GM13976 (cell line): ENCODE measurements at regions of chr3 and their contacts with region 1.

Region 1: GRCh38 chr3:63818281-63819150 is 583 bp upstream of the C3orf49 start:
- DNase-seq: peak; percentile 57
- CTCF ChIP-seq: peak; percentile 71

Region 2: DNA sequence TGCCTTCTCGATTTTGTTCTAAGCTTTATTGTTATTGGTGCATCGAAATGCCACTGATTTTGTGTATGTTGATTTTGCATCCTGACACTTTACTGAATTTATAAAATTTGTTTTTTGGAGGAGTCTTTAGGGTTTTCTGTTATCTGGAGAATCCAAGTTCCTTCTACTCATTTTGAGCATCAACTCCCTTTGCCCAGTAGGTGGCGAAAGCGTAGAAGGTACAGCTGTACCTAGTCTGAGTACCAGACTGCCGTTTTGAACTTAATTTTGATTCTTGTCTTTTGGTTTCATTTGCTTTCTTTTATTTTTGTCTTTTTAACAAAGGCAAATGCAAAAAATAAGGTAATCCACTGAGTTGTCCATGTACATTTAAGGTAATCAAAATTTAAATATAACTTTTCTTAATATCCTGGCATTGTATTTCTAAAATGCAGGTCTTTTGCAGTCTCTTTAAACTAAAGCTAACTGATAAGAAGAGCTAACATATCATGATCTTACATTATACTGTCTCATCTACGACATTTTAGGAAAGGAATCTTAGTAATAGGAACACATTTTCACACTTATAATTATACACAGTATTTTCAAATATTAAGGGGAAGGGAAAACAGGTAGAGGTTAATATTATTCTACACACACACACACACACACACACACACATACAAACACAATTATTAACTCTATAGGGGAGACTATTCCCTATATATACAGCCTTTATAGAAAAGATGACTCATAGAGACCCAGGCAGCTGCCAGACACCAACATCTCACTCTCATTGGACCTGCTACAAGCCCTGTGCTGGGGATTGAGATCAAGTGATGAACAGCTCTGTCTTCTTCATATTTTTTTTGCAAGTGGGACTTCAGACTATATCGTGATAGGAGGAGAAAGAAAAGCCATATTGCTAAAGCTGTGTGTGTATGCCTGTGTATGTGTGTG is 468.7 kb before region 1 on chr3:
- in situ Hi-C with region 1: loop called (anchors 5 kb)
- DNase-seq: peak; percentile 43
- CTCF ChIP-seq: peak; percentile 64